ENCODE measurements at regions of chr1 and their contacts with region 1.

Region 1: GRCh38 chr1:167220537-167221125 is at the start of gene POU2F1:
- ATAC-seq: peak; percentile 49 to 74 (median 67)
- H3K4me3 ChIP-seq: peak within 1 kb of the TSS; percentile 68 to 75 (median 71)
- H3K27ac ChIP-seq: peak within 1 kb of the TSS; percentile 96 to 97
- H3K4me1 ChIP-seq: peaks cover 16 to 31% of the 10 kb centered on the region in 2 donors
- total RNA-seq, gene POU2F1: 11.4 to 29.7 (median 20.2) TPM

Region 2: GRCh38 chr1:167082511-167083027 is 138.1 kb before region 1 on chr1:
- in situ Hi-C with region 1: loop called in 2 of 9 experiments (anchors 10 to 25 kb)
- ATAC-seq: peak in 3 of 8 experiments; percentile 20 to 88 (median 56)
- H3K4me3 ChIP-seq: no peak overlapping the region
- H3K27ac ChIP-seq: no peak overlapping the region
- H3K4me1 ChIP-seq: no peaks in the 10 kb centered on the region

Region 3: DNA sequence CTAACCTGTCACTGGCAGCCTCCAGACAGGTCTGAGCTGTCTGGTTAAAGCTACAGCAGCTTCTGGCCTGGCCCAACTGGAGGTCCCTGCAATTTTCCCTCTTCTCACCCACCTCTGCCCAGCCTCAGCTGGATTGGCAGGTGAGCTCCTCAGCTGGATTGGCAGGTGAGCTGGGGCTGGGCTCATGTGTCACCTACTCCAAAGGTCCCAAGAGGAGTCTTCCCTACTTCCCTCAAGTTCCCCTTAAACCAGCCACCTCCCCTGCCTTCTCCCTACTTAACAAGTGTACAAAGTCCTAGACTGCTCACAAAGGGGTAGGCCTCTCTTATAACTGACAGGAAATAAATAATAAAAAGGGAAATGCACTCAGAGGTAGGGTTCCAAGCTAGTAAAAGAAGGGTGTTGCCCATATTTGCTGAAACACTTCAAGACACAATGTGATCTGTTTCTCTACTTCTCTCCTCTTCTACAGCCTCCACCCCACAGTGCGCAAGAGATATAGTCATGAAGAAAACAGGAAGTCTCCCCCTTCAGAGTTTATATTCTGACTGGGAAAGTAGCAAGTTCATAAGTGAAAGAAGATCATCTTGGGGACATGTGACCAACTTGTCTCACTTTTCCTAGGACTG is 130.2 kb before region 1 on chr1 and contains the start of gene GPA33:
- in situ Hi-C with region 1: loop called in 2 of 9 experiments (anchors 10 to 25 kb)
- ATAC-seq: peak in 2 of 8 experiments; percentile 34 to 71
- H3K4me3 ChIP-seq: no peak within 1 kb of the TSS
- H3K27ac ChIP-seq: no peak within 1 kb of the TSS
- H3K4me1 ChIP-seq: no peaks in the 10 kb centered on the region
- total RNA-seq, gene GPA33: 0.14 to 1.2 (median 0.24) TPM in 7 of 8 experiments, not detected in the other

Measured in motor neuron (in vitro differentiated cells).